ENCODE measurements at regions of chr21 and their contacts with region 1.

Region 1: DNA sequence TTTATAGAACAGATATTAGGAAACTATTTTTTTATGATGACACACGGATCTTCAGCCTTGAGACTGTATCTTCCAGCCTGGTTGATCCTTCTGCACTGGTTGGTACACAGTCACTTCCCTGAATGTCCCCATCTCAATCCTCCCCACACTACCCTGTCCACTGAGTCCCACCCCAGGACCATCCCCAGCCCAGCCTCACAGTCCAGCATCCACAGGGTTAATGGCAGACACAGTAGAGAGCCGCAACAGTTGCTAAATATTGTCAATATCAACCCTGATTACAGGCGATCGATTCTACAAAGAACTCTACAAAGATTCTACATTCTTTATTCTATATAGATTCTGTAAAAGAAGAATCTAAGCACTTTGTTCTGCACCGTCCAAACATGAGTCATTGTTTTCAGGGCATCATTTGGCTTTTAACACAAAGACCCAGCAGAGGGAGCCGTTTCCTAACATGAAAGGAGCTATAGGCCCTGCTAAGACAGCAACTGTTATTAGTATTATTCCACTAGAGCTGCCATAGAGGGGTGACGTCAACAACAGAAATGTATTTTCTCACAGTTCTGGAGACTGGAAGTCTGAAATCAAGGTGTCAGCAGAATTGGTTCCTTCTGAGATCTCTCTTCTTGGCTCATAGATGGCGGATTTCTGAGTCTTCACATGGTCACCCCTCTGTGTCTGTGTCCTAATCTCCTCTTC is 30.1 kb upstream of the IFNAR2 start:
- DNase-seq: peak; percentile 81
- H3K4me3 ChIP-seq: no peak overlapping the region
- H3K4me3 Mint-ChIP-seq: no peak overlapping the region
- H3K27ac Mint-ChIP-seq: no peak overlapping the region
- H3K4me1 ChIP-seq: peaks cover 23% of the 10 kb centered on the region
- H3K4me1 Mint-ChIP-seq: peaks cover 22% of the 10 kb centered on the region
- H3K27me3 ChIP-seq: no peaks in the 10 kb centered on the region
- H3K27me3 Mint-ChIP-seq: no peaks in the 10 kb centered on the region
- CTCF ChIP-seq: peak; percentile 65 to 82

Region 2: DNA sequence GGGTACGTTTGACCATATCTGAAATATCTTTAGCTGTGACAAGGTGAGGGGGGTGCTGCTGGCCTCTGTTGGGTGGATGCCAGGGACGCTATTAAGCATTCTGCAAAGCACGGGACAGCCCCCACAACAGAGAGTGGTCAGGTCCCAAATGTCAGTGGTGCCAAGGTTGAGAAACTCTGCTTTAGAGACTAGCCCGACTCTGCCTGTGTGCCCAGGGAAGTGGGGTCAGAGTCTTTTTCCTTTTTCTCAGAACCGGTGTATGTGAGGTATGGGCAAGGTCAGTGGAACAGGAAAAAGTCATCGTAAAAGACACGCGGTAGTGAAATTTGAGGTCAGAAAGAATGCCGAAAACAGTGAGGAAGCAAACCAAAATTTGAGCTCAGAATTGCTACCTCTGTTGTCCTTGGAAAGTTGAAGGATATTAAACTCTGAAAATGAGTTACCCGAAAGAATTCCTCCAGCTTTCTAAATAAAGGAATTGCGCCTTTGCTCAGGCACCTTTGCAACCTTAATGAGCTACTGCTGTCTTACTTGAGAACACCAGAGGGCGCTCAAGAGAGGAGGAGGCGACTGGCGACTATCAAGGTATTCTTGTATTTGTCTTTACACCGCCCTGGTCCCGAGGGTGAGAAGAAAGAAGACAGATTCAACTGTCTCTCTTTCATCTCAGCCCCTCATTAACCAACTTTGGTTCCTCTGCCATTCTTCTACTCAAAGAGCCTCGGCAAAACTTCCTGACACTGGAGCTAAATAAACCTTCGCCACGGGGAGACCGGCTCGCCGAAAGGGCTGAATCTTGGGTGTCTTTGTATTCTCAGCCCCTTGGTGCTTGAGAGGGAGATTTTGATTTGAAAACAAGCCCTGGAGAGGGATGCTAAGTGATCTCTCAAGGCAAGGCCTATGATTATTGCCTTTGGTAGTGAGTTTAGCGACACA is 259.3 kb before region 1 on chr21:
- CTCF ChIA-PET with region 1: interaction called, 14 read pairs
- POLR2A ChIA-PET with region 1: no interaction called
- intact Hi-C with region 1: loop called (anchors 1 kb)
- DNase-seq: peak; percentile 39 to 46
- H3K4me3 ChIP-seq: no peak overlapping the region
- H3K4me3 Mint-ChIP-seq: no peak overlapping the region
- H3K27ac Mint-ChIP-seq: no peak overlapping the region
- H3K4me1 ChIP-seq: no peaks in the 10 kb centered on the region
- H3K4me1 Mint-ChIP-seq: no peaks in the 10 kb centered on the region
- H3K27me3 ChIP-seq: no peaks in the 10 kb centered on the region
- H3K27me3 Mint-ChIP-seq: peaks cover 6% of the 10 kb centered on the region
- CTCF ChIP-seq: peak; percentile 63 to 66

Region 3: GRCh38 chr21:33127154-33127893 is 72.3 kb before region 1 on chr21:
- CTCF ChIA-PET with region 1: no interaction called
- POLR2A ChIA-PET with region 1: no interaction called
- intact Hi-C with region 1: loop called (anchors 2 kb)
- DNase-seq: peak; percentile 56 to 69
- H3K4me3 ChIP-seq: no peak overlapping the region
- H3K4me3 Mint-ChIP-seq: no peak overlapping the region
- H3K27ac Mint-ChIP-seq: no peak overlapping the region
- H3K4me1 ChIP-seq: peaks cover 10% of the 10 kb centered on the region; the same call in 1 of the 2 replicates
- H3K4me1 Mint-ChIP-seq: peaks cover 10% of the 10 kb centered on the region
- H3K27me3 ChIP-seq: no peaks in the 10 kb centered on the region; the same call in 1 of the 2 replicates
- H3K27me3 Mint-ChIP-seq: peaks cover 16% of the 10 kb centered on the region
- CTCF ChIP-seq: peak; percentile 52 to 77

Region 4: GRCh38 chr21:33212159-33212851 is 12.6 kb after region 1 on chr21:
- CTCF ChIA-PET with region 1: no interaction called
- POLR2A ChIA-PET with region 1: no interaction called
- intact Hi-C with region 1: no loop called
- DNase-seq: no peak
- H3K4me3 ChIP-seq: no peak overlapping the region
- H3K4me3 Mint-ChIP-seq: no peak overlapping the region
- H3K27ac Mint-ChIP-seq: no peak overlapping the region
- H3K4me1 ChIP-seq: peaks cover 5% of the 10 kb centered on the region; the same call in 1 of the 2 replicates
- H3K4me1 Mint-ChIP-seq: peaks cover 9% of the 10 kb centered on the region
- H3K27me3 ChIP-seq: no peaks in the 10 kb centered on the region
- H3K27me3 Mint-ChIP-seq: no peaks in the 10 kb centered on the region
- CTCF ChIP-seq: no peak

Region 5: DNA sequence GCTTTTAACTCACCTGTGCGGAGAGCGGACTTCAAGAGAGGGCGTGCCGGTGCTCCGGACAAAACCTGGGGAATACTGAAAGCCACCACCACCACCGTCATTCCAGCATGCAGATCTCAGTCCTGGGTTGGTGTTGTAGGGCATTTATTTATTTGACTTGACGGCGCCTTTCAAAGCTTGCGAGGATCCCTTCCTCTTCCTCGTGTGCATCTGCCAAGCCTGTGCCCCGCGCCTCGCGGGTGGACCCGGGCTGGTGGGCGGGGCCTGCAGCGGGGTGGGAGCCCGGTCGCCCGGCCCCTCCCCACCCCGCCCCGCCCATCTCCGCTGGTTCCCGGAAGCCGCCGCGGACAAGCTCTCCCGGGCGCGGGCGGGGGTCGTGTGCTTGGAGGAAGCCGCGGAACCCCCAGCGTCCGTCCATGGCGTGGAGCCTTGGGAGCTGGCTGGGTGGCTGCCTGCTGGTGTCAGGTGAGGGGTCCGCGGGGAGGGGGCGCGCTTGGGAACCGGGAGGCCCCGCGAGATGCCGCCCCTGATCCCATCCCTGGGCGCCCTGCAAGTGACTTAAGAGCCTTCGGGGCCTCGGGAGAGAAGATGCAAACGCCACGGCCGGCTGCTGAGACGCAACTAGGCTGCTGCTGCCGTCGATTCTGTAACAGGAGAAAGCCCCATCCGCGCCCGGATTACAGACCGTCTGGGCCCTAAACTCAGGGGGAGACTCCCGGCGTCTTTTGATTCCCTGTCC is 66.6 kb after region 1 on chr21 and contains the start of gene IL10RB:
- CTCF ChIA-PET with region 1: interaction called, 5 read pairs
- POLR2A ChIA-PET with region 1: interaction called, 4 read pairs
- intact Hi-C with region 1: loop called (anchors 1 kb)
- DNase-seq: peak; percentile 58 to 79
- H3K4me3 ChIP-seq: peak within 1 kb of the TSS; percentile 75
- H3K4me3 Mint-ChIP-seq: peak within 1 kb of the TSS; percentile 97
- H3K27ac Mint-ChIP-seq: peak within 1 kb of the TSS; percentile 91
- H3K4me1 ChIP-seq: peaks cover 15% of the 10 kb centered on the region
- H3K4me1 Mint-ChIP-seq: peaks cover 32% of the 10 kb centered on the region
- H3K27me3 ChIP-seq: no peaks in the 10 kb centered on the region
- H3K27me3 Mint-ChIP-seq: no peaks in the 10 kb centered on the region
- CTCF ChIP-seq: no peak
- total RNA-seq, gene IL10RB: 11.7 and 13.1 TPM in 2 replicates

Region 6: DNA sequence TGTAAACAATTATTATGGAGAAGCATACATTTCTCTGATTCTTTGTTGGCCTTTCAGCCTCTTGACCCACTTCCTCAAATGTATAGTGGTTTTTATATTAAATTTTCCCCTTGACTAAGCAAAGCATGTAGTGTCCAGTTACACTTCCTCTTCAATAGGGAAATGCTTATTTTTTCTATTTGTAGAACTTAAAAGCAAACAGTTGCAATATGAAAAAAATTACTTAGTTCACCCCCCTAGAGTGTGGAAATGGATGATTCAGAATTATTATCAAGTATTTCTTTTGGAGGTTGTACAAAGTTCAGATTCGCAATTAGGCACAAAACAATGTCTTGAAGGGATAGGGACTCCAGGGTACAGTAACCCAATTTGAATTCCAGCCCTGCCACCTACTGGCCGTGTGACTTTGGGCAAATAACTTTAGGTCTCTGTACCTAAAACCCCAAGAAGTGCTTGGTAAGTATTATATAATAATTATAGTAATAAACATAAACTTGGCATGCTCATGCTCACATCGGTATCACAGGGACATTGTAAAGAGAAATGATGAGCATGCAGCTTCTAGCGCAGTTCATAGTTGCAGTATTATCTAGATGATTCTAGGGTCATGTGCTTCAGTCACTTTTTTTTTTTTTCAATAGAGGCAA is 174.9 kb after region 1 on chr21:
- CTCF ChIA-PET with region 1: no interaction called
- POLR2A ChIA-PET with region 1: no interaction called
- intact Hi-C with region 1: loop called (anchors 1 kb)
- DNase-seq: peak; percentile 43 to 46
- H3K4me3 ChIP-seq: no peak overlapping the region
- H3K4me3 Mint-ChIP-seq: no peak overlapping the region
- H3K27ac Mint-ChIP-seq: no peak overlapping the region
- H3K4me1 ChIP-seq: peaks cover 6% of the 10 kb centered on the region; the same call in 1 of the 2 replicates
- H3K4me1 Mint-ChIP-seq: no peaks in the 10 kb centered on the region
- H3K27me3 ChIP-seq: no peaks in the 10 kb centered on the region
- H3K27me3 Mint-ChIP-seq: no peaks in the 10 kb centered on the region
- CTCF ChIP-seq: peak; percentile 65 to 69